ENCODE measurements at regions of chr1 and their contacts with region 1.

Region 1: DNA sequence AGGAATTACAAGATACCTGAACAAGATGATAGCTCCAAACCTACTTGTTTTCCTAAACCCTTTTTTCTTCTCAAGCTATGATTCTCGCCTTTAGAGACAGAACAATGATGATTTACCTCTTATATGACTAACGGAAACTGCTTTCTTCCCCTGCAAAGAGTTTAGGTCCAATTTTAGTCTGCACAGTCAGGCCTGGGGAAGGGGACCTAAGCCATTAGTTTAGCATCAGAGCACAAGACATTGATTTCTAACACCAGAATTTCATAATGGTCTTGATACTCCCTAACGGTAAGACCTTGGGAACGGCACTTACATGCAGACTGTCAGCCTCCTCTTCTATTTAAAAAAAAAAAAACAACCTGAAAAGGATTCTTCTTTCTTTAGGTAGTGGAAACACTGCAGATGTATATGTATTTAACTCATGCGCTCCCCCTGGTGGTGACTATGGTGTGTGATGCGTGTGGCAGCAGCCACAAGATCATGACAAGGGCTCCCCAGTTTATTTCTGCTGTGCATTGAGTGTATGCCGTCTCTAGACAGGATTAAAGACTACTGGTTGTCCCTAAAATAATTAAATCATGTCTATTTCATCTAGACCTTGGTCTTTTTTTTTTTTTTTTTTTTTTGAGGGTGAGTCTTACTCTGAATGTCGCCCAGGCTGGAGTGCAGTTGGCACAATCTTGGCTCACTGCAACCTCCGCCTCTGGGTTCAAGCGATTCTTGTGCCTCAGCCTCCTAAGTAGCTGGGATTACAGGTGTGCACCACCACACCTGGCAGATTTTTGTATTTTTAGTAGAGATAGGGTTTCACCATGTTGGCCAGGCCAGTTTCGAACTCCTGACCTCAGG is 37.3 kb upstream of the TMEM222 start:
- DNase-seq: peak; percentile 84
- H3K4me3 ChIP-seq: no peak overlapping the region
- H3K27ac ChIP-seq: no peak overlapping the region
- H3K4me1 ChIP-seq: no peaks in the 10 kb centered on the region
- H3K27me3 ChIP-seq: no peaks in the 10 kb centered on the region

Region 2: GRCh38 chr1:26820784-26821269 is 463.8 kb before region 1 on chr1:
- in situ Hi-C with region 1: no loop called
- DNase-seq: no peak
- H3K4me3 ChIP-seq: no peak overlapping the region
- H3K27ac ChIP-seq: no peak overlapping the region
- H3K4me1 ChIP-seq: peaks cover 3% of the 10 kb centered on the region; the same call in 1 of the 2 replicates
- H3K27me3 ChIP-seq: no peaks in the 10 kb centered on the region

Region 3: GRCh38 chr1:27044613-27045151 is 240.0 kb before region 1 on chr1:
- in situ Hi-C with region 1: loop called (anchors 10 kb)
- DNase-seq: peak; percentile 88
- H3K4me3 ChIP-seq: no peak overlapping the region
- H3K27ac ChIP-seq: no peak overlapping the region
- H3K4me1 ChIP-seq: peaks cover 8% of the 10 kb centered on the region
- H3K27me3 ChIP-seq: no peaks in the 10 kb centered on the region

Region 4: GRCh38 chr1:27102707-27103491 is 181.8 kb before region 1 on chr1:
- in situ Hi-C with region 1: loop called (anchors 5 kb)
- DNase-seq: peak; percentile 72
- H3K4me3 ChIP-seq: no peak overlapping the region
- H3K27ac ChIP-seq: no peak overlapping the region
- H3K4me1 ChIP-seq: peaks cover 26% of the 10 kb centered on the region
- H3K27me3 ChIP-seq: no peaks in the 10 kb centered on the region

Measured in GM23248 (cell line).